GM12878 (cell line): ENCODE measurements at regions of chr21 and their contacts with region 1.

Region 1: GRCh38 chr21:44880762-44881585 is 7.5 kb upstream of the PTTG1IP start:
- DNase-seq: no peak
- ATAC-seq: peak; percentile 73
- H3K4me3 ChIP-seq: no peak overlapping the region
- H3K27ac ChIP-seq: peak overlapping the region; percentile 25
- H3K4me1 ChIP-seq: peaks cover 36% of the 10 kb centered on the region
- H3K27me3 ChIP-seq: no peaks in the 10 kb centered on the region
- CTCF ChIP-seq: no peak
- EP300 ChIP-seq: peak in 1 of 2 experiments; percentile 57; a peak in 1 of 4 replicates
- POLR2A ChIP-seq: no peak
- RAD21 ChIP-seq: no peak

Region 2: DNA sequence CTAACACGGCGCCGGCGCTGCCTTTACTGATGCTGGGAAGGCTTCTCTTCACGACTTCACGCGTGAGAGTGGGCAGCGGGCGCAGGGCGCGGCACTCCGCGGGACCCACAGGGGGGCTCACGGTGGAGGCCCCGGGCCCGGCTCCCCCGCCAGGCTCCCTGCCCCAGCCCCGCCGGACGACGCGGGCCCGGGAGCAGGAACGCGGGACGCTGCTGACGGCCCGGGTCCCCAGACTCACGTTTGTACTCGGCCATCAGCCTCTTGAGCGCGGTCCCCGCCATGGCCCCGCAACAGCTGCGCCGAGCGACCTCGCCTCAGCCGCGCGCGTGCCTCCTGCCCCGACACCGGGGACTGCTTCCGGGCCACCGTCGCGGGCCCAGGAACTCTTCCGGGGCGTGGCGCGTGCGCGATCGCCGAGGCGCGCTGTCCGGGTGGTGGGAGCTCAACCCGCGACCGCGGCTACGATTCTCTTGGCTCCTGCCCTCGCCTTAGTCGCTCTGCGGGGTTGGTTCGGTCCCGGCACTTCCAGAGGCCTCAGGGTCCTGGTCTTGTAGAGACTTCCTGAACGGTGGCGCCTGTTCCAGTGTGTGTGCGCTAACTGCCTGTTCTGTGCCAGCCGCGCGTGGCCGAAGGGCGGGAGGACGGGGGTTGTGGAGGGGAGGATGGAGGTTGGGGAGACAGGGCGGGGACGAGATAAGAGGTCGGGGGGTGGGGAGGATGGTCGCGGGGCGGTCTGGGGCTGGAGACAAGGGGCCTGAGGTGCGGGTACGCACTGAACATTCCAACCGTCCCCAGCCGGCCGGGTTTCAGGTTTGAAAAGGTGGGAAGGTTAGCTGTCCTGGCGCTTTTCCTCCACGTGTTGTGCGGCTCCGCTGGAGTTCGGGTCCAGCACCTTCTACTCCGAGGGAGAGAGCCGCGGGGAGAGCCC is 79.2 kb before region 1 on chr21 and contains the start of gene UBE2G2:
- CTCF ChIA-PET with region 1: interaction called, 67 read pairs
- POLR2A ChIA-PET with region 1: interaction called, 15 read pairs
- RAD21 ChIA-PET with region 1: interaction called, 3 read pairs
- SMC1A ChIA-PET with region 1: interaction called, 22 read pairs
- in situ Hi-C with region 1: no loop called
- intact Hi-C with region 1: no loop called
- DNase-seq: no peak
- ATAC-seq: peak; percentile 96
- H3K4me3 ChIP-seq: peak within 1 kb of the TSS; percentile 72
- H3K27ac ChIP-seq: peak within 1 kb of the TSS; percentile 71
- H3K4me1 ChIP-seq: peaks cover 12% of the 10 kb centered on the region
- H3K27me3 ChIP-seq: no peaks in the 10 kb centered on the region
- CTCF ChIP-seq: no peak
- EP300 ChIP-seq: no peak
- POLR2A ChIP-seq: peak; percentile 92
- RAD21 ChIP-seq: no peak
- polyA plus RNA-seq, gene UBE2G2: 27.0 to 32.0 TPM

Region 3: DNA sequence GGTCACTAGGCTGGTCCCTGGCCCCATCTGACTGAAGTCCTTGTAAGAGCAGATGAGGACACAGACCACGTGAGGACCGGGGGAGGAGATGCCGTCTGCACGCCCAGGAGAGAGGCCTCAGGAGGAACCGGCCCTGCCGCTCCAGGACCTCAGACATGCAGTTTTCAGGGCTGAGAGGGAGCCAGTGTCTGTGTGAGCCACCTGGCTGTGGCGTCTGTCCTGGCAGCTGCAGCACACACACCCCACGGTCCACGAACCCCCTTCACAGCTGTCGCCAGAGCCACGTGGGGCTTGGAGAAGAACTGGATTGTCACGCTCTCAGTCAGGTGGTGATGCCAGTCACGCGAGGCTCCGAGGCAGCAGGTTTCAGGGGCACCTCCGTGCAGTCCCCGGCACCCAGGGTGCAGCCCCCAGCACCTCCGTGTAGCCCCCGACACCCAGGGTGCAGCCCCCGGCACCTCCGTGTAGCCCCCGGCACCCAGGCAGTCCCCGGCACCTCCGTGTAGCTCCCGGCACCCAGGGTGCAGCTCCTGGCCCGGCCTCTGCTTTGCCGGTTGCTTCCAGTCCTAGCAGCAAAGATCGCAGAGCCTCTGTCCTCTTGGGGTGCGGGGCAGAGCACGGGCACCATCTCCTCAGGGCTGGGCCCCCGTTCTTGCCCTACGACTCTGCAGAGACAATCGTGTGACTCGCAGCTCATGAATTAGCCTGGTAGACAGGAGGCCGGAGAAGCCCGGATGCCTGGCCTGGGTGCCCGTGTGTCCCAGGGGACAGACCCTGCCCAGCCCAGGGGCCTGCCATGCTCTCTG is 44.1 kb before region 1 on chr21:
- CTCF ChIA-PET with region 1: no interaction called
- POLR2A ChIA-PET with region 1: no interaction called
- RAD21 ChIA-PET with region 1: no interaction called
- SMC1A ChIA-PET with region 1: no interaction called
- in situ Hi-C with region 1: no loop called
- intact Hi-C with region 1: no loop called
- DNase-seq: no peak
- ATAC-seq: no peak
- H3K4me3 ChIP-seq: no peak overlapping the region
- H3K27ac ChIP-seq: no peak overlapping the region
- H3K4me1 ChIP-seq: no peaks in the 10 kb centered on the region
- H3K27me3 ChIP-seq: no peaks in the 10 kb centered on the region; a peak in 1 of 4 replicates
- CTCF ChIP-seq: no peak
- EP300 ChIP-seq: no peak
- POLR2A ChIP-seq: no peak
- RAD21 ChIP-seq: no peak

Region 4: GRCh38 chr21:44865561-44866280 is 15.3 kb before region 1 on chr21:
- CTCF ChIA-PET with region 1: no interaction called
- POLR2A ChIA-PET with region 1: no interaction called
- RAD21 ChIA-PET with region 1: no interaction called
- SMC1A ChIA-PET with region 1: no interaction called
- in situ Hi-C with region 1: no loop called
- intact Hi-C with region 1: no loop called
- DNase-seq: no peak
- ATAC-seq: peak; percentile 87
- H3K4me3 ChIP-seq: no peak overlapping the region
- H3K27ac ChIP-seq: no peak overlapping the region; the same call in 1 of the 2 replicates
- H3K4me1 ChIP-seq: peaks cover 23% of the 10 kb centered on the region
- H3K27me3 ChIP-seq: no peaks in the 10 kb centered on the region
- CTCF ChIP-seq: no peak
- EP300 ChIP-seq: no peak
- POLR2A ChIP-seq: no peak
- RAD21 ChIP-seq: no peak

Region 5: GRCh38 chr21:44892536-44893277 is 11.7 kb after region 1 on chr21:
- CTCF ChIA-PET with region 1: interaction called, 32 read pairs
- POLR2A ChIA-PET with region 1: interaction called, 3 read pairs
- RAD21 ChIA-PET with region 1: interaction called, 4 read pairs
- SMC1A ChIA-PET with region 1: interaction called, 6 read pairs
- in situ Hi-C with region 1: no loop called
- intact Hi-C with region 1: no loop called
- DNase-seq: no peak
- ATAC-seq: peak; percentile 96
- H3K4me3 ChIP-seq: no peak overlapping the region
- H3K27ac ChIP-seq: no peak overlapping the region
- H3K4me1 ChIP-seq: no peaks in the 10 kb centered on the region
- H3K27me3 ChIP-seq: no peaks in the 10 kb centered on the region
- CTCF ChIP-seq: peak; percentile 94 to 97 (median 96)
- EP300 ChIP-seq: no peak
- POLR2A ChIP-seq: no peak
- RAD21 ChIP-seq: peak; percentile 76

Region 6: GRCh38 chr21:44939532-44940115 is 58.6 kb after region 1 on chr21 and contains the start of gene SLX9:
- CTCF ChIA-PET with region 1: interaction called, 4 read pairs
- POLR2A ChIA-PET with region 1: interaction called, 3 read pairs
- RAD21 ChIA-PET with region 1: interaction called, 3 read pairs
- SMC1A ChIA-PET with region 1: no interaction called
- in situ Hi-C with region 1: loop called (anchors 10 kb)
- intact Hi-C with region 1: no loop called
- DNase-seq: no peak
- ATAC-seq: peak; percentile 92
- H3K4me3 ChIP-seq: peak within 1 kb of the TSS; percentile 92
- H3K27ac ChIP-seq: peak within 1 kb of the TSS; percentile 50
- H3K4me1 ChIP-seq: peaks cover 18% of the 10 kb centered on the region
- H3K27me3 ChIP-seq: no peaks in the 10 kb centered on the region
- CTCF ChIP-seq: no peak
- EP300 ChIP-seq: no peak
- POLR2A ChIP-seq: peak; percentile 88
- RAD21 ChIP-seq: no peak
- polyA plus RNA-seq, gene SLX9: 0.69 to 5.5 TPM

Region 7: GRCh38 chr21:44958471-44959191 is 77.7 kb after region 1 on chr21:
- CTCF ChIA-PET with region 1: no interaction called
- POLR2A ChIA-PET with region 1: no interaction called
- RAD21 ChIA-PET with region 1: no interaction called
- SMC1A ChIA-PET with region 1: no interaction called
- in situ Hi-C with region 1: no loop called
- intact Hi-C with region 1: no loop called
- DNase-seq: no peak
- ATAC-seq: no peak
- H3K4me3 ChIP-seq: no peak overlapping the region
- H3K27ac ChIP-seq: no peak overlapping the region
- H3K4me1 ChIP-seq: no peaks in the 10 kb centered on the region
- H3K27me3 ChIP-seq: no peaks in the 10 kb centered on the region
- CTCF ChIP-seq: no peak
- EP300 ChIP-seq: no peak
- POLR2A ChIP-seq: no peak
- RAD21 ChIP-seq: no peak

Region 8: GRCh38 chr21:45179568-45180245 is 298.7 kb after region 1 on chr21:
- CTCF ChIA-PET with region 1: no interaction called
- POLR2A ChIA-PET with region 1: no interaction called
- RAD21 ChIA-PET with region 1: no interaction called
- SMC1A ChIA-PET with region 1: no interaction called
- in situ Hi-C with region 1: no loop called
- intact Hi-C with region 1: no loop called
- DNase-seq: no peak
- ATAC-seq: no peak
- H3K4me3 ChIP-seq: no peak overlapping the region
- H3K27ac ChIP-seq: no peak overlapping the region
- H3K4me1 ChIP-seq: no peaks in the 10 kb centered on the region
- H3K27me3 ChIP-seq: no peaks in the 10 kb centered on the region
- CTCF ChIP-seq: no peak
- EP300 ChIP-seq: no peak
- POLR2A ChIP-seq: no peak
- RAD21 ChIP-seq: no peak